Mammary epithelial cell (primary cell): ENCODE measurements at regions of chr12 and their contacts with region 1.

Region 1: GRCh38 chr12:46858368-46858767 is 32.6 kb upstream of the SLC38A4 start:
- DNase-seq: no peak
- H3K4me3 ChIP-seq: no peak overlapping the region
- H3K27ac ChIP-seq: no peak overlapping the region
- H3K4me1 ChIP-seq: no peaks in the 10 kb centered on the region
- H3K27me3 ChIP-seq: no peaks in the 10 kb centered on the region
- CTCF ChIP-seq: no peak

Region 2: DNA sequence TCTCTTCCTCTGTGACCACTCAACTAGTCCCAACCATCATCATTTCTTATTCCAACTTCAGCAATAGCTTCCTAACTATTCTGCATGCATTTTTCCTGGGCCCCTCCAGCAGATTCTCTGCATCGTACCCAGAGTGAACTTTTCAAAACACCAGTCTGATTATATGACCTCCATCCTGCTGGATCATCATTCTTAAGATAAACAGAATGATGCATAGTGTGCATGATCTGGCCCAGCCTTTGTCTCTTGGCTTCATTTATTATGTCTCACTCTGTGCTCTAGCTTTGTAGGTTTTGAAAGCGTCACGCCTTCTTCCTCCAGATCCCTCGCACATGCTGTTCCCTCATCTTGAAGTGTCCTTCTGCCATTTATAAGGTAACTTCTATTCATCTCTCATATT is 13.8 kb after region 1 on chr12:
- CTCF ChIA-PET with region 1: interaction called, 11 read pairs
- dilution Hi-C with region 1: no loop called
- in situ Hi-C with region 1: no loop called
- intact Hi-C with region 1: no loop called
- DNase-seq: no peak
- H3K4me3 ChIP-seq: no peak overlapping the region
- H3K27ac ChIP-seq: no peak overlapping the region
- H3K4me1 ChIP-seq: no peaks in the 10 kb centered on the region
- H3K27me3 ChIP-seq: no peaks in the 10 kb centered on the region
- CTCF ChIP-seq: no peak

Region 3: DNA sequence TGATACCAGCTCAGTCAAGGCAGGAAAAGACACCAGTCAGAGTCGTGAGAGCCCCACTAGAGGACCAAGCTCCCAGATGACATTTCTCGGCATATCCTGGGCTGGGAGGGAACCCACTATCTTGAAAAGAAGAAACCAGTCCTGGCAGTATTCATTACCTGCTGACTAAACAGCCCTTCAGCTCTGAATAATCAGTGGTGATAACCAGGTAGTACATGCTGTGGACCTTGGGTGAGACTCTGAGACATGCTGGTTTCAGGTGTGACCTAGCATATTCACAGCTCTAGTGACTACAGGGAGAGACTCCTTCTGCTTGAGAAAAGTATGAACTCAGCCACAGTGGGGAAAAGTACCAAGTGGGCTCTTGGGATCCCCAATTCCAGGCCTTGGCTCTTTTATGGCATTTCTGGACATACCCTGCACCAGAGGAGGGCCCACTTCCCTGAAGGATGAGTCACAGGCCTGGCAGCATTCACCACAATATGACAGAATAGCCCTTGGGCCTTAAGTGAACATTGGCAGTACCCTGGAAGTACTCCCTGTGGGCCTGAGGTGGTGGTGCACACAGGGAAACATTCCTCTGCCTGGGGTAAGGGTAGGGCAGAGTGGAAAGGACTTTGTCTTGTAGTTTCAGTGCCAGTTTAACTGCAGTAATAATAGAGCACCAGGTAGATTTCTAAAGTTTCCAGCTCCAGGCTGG is 50.0 kb after region 1 on chr12:
- CTCF ChIA-PET with region 1: no interaction called
- dilution Hi-C with region 1: no loop called
- in situ Hi-C with region 1: no loop called
- intact Hi-C with region 1: no loop called
- DNase-seq: peak; percentile 88
- H3K4me3 ChIP-seq: no peak overlapping the region
- H3K27ac ChIP-seq: peak overlapping the region; percentile 92
- H3K4me1 ChIP-seq: peaks cover 32% of the 10 kb centered on the region
- H3K27me3 ChIP-seq: no peaks in the 10 kb centered on the region
- CTCF ChIP-seq: peak; percentile 5